ENCODE measurements at regions of chr2 and their contacts with region 1.

Region 1: DNA sequence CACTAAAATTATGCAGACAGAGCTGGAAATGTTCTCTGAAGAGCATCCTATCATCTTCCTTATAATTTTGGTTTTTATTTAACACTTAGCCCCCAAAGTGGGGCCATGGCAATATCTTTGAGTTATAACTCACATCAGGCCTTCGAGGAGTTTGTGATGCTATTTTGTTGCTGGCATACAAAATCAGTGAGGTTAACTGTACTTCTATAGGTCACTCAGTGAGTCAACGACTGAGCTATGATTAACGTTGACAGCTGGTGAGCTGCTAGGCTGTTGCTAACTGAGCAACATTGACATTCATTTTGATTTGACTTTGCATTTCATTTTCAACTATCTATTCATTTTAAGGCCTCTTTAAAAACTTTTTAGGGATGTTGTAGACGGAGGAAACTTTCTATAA is 50.0 kb downstream of the GPD2 start:
- DNase-seq: no peak
- H3K4me3 ChIP-seq: no peak overlapping the region
- CTCF ChIP-seq: no peak

Region 2: DNA sequence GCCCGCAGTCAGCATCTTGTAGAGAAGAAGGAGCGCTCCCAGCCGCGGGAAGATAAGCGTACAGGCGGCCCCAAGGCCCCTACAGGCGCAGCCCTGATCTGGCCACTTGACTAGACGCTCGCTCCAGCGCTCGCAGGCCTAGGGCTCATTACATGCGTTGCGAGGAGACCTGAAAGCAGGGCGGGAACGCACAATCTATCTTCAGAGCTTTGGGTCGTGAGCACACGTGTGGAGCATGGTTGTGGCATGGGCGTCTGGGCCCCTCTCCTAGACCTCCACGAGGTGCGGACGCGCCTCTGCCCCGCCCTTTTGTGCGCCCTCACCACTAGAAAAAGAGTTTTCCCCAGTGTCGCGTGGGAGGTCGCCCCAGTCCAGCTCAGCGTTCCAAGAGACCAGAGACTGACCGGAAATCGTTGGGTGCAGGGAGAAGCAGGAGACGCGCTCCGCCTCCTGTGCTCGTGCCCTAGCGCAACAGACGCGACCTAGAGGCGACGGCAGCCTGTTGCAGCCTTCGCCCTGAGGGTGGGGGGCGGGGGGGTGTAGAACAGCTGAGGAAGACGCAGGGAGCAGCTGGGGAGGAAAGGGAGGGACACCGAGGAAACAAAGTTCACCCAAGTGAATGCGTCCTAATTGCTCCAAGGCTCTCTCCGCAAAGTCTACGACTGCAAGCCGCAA is 166.2 kb before region 1 on chr2:
- in situ Hi-C with region 1: no loop called
- DNase-seq: no peak
- H3K4me3 ChIP-seq: peak overlapping the region; percentile 36
- CTCF ChIP-seq: no peak

Region 3: GRCh38 chr2:156443089-156443488 is 43.1 kb before region 1 on chr2:
- in situ Hi-C with region 1: loop called (anchors 5 kb)
- DNase-seq: no peak
- H3K4me3 ChIP-seq: no peak overlapping the region
- CTCF ChIP-seq: no peak

Measured in astrocyte of the cerebellum (primary cell).